ENCODE measurements at regions of chr17 and their contacts with region 1.

Region 1: DNA sequence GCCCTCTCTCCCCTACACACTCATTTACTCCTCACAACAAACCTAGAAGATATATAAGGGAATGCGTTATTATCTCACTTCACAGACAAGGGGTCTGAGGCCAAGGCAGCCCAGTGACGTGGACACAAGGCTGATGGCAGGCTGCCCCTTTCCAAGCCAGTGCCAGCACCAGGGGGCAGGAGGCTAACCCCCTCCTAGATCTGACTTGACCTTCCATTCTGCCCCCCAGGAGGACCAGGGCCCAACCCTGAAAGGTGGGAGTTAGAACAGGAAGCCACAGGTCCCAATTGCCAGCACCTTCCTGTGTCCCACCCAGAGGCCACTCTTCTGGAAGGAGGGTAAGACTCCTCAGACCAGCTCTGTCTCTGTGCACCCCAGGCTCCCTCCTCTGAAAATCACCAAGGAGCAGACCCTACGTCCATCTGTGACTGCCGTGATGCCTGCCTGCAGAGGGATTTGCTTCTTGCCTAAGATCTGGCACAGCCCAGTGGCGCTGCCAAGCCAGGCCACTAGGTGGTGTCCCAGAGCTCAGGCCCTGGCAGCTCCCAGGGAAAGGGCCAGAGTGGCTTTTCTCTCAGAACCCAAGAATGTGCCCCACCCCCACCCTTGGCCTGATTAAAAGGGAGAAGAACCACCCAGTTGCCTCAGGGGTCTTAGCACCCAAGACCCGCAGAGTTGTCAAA is 42.4 kb upstream of the MRPS23 start:
- H3K4me3 ChIP-seq: no peak overlapping the region
- H3K27ac ChIP-seq: no peak overlapping the region
- H3K4me1 ChIP-seq: peaks cover 6% of the 10 kb centered on the region
- CTCF ChIP-seq: peak; percentile 92

Region 2: DNA sequence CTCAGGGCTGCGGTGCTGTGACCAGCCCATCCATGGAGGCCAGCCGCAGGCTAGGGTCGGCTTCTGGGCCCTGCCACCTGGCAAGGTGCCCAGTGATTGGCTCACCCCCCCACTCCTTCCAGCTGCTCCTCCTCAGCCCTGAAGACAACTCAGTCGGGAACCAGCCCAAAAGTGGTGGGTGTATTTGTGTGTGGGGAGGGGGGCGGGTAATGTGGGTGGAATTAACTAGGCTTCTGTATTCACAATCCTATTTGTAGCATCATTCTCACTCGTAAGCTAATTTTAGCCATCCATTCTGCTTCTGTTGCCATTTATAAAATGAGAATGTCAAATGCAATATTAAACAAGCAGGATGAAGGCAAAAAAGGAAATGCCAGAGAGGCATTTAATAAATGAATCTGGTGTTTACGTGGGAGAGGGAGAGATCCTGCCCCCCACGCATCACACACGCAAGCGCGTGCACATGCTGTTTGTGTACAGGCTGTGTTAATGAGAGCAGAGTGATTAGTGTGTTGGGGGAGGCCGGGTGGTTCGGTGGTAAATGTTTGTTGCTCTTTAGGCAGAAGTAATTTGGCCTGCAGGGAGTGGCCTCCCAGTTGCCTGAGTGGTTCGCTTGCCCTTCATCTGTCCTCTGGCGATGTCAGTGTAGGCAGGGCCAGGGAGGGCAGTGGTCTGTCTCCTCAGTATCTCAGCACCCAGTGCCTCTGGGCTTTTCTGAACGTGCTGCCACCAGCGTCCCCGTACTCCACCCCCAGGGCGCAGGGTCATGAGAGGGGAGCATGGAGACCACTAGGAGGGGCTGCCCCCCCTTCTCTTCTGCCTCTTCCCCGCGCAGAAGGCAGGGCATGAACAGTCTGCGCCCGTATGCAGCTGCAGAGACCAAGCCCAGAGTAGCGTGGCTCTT is 287.3 kb before region 1 on chr17:
- CTCF ChIA-PET with region 1: no interaction called
- POLR2A ChIA-PET with region 1: no interaction called
- H3K4me3 ChIP-seq: no peak overlapping the region
- H3K27ac ChIP-seq: peak overlapping the region; percentile 54
- H3K4me1 ChIP-seq: peaks cover 20% of the 10 kb centered on the region
- CTCF ChIP-seq: peak; percentile 36; the same call in 1 of the 2 replicates

Region 3: DNA sequence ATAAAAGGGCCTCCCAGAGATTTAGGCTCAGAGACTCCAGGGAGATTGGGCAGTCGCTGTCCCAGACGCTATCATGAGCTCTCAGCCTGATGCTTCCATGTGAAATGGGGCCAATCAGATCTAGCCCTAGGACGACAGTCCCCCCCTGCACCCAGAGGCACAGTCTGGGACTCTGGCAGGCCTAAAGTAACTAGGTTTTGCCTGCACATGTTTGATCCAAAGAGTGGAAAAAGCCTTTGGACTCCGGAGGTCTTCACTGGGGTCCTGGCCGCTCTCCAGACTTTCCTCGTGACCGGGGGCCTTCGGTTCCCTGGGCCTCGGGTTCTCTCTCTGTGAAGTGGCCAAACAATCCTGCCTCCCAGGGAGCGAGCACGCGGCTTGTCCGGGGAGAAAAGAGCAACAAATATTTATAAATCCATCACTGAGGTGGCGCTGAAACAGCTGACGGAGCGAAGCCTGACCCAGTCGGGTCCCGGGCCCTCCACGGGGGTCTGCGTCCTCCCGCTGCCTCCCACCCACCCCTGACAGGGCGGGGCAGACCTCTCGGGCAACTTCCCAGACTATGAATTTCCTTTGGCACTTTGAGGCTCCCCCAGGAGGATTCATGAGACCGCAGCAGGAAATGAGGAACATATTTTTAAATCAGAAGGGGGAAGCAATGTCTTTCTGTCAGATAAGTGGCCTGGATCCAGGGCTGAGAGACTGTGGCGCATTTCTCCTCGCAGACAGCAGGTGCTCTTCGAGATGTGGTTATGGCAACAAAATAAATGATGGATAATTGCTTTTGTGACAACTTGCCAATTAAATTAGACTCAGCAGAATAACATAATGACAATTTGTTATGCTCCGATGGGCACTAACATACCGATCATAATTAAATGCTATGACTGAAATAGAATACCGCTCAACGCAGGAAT is 81.3 kb before region 1 on chr17:
- CTCF ChIA-PET with region 1: no interaction called
- POLR2A ChIA-PET with region 1: no interaction called
- H3K4me3 ChIP-seq: no peak overlapping the region
- H3K27ac ChIP-seq: peak overlapping the region; percentile 93
- H3K4me1 ChIP-seq: peaks cover 24% of the 10 kb centered on the region
- CTCF ChIP-seq: peak; percentile 31

Region 4: GRCh38 chr17:57842280-57842679 is 50.0 kb before region 1 on chr17:
- CTCF ChIA-PET with region 1: no interaction called
- POLR2A ChIA-PET with region 1: no interaction called
- H3K4me3 ChIP-seq: no peak overlapping the region
- H3K27ac ChIP-seq: no peak overlapping the region
- H3K4me1 ChIP-seq: no peaks in the 10 kb centered on the region
- CTCF ChIP-seq: no peak

Region 5: DNA sequence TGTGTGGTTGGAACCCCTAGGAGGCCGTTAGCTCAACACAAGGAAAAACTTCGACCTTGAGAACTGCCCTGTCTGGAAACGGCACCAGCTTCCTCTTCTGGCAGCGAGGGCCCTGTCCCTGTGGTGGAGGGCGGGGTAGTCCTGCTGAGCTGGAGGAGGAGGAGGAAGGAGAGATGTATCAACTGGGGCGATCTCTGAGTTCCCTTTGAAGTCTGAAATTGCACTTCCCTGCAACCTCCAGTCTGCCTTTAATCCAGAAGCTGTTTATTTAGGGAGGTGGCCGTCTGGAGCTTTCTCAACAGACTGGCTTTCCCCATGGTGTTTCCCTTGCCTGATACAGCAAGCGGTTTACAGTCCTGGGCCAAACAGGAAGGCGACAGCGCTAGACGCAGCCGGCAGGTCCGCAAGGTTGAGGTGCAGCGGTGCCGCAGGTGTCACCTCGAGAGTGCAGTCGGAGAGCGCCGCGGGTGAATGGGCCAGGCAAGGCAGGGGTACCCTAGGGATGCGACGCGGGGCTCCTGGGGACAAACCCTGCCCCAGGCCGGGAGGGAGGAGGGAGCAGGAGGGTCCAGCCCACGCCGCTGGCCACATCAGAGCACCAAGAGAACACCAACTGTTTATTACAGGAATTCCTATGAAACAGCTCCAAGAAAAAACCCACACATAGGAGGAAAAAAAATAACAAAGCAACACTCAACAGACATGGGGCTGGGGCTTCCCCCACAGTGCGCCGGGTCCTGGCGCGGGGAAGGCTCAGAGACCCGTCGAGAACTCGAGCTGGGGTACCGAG is 31.1 kb before region 1 on chr17:
- CTCF ChIA-PET with region 1: interaction called, 32 read pairs
- POLR2A ChIA-PET with region 1: interaction called, 3 read pairs
- H3K4me3 ChIP-seq: no peak overlapping the region
- H3K27ac ChIP-seq: peak overlapping the region; percentile 38; the same call in 1 of the 2 replicates
- H3K4me1 ChIP-seq: peaks cover 4% of the 10 kb centered on the region; the same call in 1 of the 2 replicates
- CTCF ChIP-seq: no peak

Region 6: DNA sequence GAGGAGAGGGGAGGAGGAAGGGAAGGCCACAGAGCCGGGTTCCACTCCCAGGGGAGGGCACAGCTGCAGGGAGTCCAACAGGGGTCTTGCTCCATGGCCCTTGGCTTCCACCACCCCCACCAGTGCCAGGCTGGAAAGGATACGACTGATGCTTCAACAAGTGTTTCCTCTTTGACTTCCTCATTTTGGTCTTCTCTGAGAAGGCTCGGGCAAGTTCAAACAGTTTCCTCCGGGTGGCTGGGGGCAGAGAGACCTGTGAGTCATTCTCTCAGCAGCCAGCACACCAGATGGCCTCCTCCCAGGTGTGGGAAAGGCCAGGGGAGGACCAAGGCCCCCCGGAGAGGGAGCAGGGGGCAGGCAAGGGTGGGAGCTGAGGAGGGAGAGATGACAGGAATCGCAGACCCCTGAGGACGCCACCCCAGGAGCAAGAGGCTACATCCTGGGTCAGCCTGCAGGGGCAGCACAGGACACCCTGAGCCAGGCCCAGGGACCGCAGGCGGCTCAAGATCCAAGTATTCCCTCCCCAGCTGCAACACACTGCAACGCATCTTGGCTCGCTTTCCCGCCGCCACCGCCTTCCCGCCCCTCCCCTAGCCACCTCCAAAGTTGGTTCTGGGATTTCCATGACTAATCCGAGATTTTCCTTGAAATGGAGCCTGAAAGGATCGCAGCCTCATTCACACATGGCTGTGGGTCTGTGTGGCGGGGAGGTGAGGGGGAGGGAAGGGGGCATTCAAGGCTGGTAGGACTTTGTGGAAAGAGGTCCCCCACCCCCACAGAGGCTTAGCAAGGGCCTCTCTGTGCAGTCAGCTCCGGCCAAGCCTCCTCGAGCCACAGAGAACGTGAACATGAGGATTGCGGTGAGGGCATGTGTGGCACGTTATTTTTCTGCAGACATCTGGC is 24.0 kb before region 1 on chr17:
- CTCF ChIA-PET with region 1: interaction called, 36 read pairs
- POLR2A ChIA-PET with region 1: no interaction called
- H3K4me3 ChIP-seq: no peak overlapping the region
- H3K27ac ChIP-seq: peak overlapping the region; percentile 64
- H3K4me1 ChIP-seq: peaks cover 6% of the 10 kb centered on the region; the same call in 1 of the 2 replicates
- CTCF ChIP-seq: peak; percentile 12; the same call in 1 of the 2 replicates

Region 7: DNA sequence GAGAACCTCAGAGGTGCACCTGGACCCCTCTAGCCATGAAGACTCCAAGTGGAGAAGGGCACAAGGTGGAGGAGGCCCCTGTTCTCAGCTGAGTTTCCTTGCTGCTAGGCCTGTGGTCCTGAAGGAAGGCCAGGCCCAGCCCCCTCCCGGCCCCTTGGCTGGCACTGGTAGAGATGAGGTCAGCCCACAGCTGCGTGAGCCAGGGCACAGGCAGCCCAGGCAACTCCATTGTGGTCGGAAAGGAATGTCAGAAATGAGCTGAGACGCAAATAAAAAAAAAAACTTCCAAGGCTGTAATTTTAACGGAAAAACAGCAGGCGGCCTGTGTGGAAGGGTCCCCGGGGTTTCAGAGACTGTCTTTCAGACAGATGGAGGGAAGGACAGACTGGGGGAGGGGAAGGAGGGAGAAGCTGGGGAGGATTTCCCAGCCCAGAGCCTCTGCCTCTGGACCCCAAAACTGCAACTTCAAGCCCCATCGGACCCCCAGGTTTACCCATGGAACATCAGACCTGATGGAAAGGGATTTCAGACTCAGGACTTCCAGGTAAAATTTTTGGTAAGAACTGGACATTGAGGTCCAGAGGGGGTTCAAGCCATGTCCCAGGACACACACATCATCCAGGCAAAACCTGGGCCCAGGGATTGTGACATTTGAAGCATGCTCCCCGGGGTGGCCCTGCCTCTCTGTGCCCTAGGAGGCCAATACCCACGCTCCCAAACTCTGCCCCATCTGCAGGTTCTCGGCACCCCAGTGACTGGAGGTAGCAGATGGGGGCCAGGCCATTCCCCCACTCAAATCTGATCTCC is 16.8 kb before region 1 on chr17:
- CTCF ChIA-PET with region 1: interaction called, 95 read pairs
- POLR2A ChIA-PET with region 1: interaction called, 11 read pairs
- H3K4me3 ChIP-seq: no peak overlapping the region
- H3K27ac ChIP-seq: peak overlapping the region; percentile 87
- H3K4me1 ChIP-seq: peaks cover 21% of the 10 kb centered on the region
- CTCF ChIP-seq: peak; percentile 65

Region 8: GRCh38 chr17:57902800-57903759 is 10.8 kb after region 1 on chr17:
- CTCF ChIA-PET with region 1: interaction called, 22 read pairs
- POLR2A ChIA-PET with region 1: no interaction called
- H3K4me3 ChIP-seq: no peak overlapping the region
- H3K27ac ChIP-seq: no peak overlapping the region
- H3K4me1 ChIP-seq: no peaks in the 10 kb centered on the region
- CTCF ChIP-seq: no peak

Region 9: GRCh38 chr17:57946798-57947358 is 54.6 kb after region 1 on chr17:
- CTCF ChIA-PET with region 1: interaction called, 38 read pairs
- POLR2A ChIA-PET with region 1: interaction called, 3 read pairs
- H3K4me3 ChIP-seq: no peak overlapping the region
- H3K27ac ChIP-seq: no peak overlapping the region
- H3K4me1 ChIP-seq: peaks cover 52% of the 10 kb centered on the region
- CTCF ChIP-seq: no peak

Region 10: DNA sequence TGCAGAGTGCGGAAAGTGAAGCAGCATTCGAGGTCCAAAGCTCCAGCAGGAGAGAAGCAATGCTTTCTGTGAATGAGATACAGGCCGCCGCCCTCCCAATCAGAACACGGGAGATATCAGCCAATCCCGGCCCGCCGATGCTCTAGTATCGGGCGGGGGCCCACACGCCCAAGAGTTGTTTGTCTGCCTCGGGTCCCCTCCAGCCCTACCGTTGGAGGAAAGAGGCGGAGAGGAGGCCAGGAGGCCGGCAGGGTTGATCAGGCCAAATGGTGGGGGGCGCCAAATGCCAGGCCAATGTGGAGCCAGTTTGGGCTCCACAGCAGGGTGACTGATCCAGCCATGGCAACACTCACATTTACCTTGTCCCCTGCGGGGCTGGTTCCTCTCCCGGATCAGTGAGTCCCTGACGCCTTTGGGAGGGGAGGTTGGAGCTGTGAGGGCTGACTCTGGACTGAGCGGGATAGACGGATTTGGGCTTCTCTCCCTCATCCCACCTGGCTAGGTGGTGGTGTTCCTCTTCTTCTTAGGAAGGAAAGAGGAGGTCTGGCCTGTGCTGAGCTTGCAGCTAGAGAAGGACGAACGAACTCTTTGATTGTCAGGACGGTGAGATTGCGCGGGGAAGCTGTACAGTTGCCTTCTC is 73.4 kb after region 1 on chr17:
- CTCF ChIA-PET with region 1: interaction called, 12 read pairs
- POLR2A ChIA-PET with region 1: no interaction called
- H3K4me3 ChIP-seq: no peak overlapping the region
- H3K27ac ChIP-seq: no peak overlapping the region
- H3K4me1 ChIP-seq: peaks cover 3% of the 10 kb centered on the region; the same call in 1 of the 2 replicates
- CTCF ChIP-seq: no peak

Region 11: DNA sequence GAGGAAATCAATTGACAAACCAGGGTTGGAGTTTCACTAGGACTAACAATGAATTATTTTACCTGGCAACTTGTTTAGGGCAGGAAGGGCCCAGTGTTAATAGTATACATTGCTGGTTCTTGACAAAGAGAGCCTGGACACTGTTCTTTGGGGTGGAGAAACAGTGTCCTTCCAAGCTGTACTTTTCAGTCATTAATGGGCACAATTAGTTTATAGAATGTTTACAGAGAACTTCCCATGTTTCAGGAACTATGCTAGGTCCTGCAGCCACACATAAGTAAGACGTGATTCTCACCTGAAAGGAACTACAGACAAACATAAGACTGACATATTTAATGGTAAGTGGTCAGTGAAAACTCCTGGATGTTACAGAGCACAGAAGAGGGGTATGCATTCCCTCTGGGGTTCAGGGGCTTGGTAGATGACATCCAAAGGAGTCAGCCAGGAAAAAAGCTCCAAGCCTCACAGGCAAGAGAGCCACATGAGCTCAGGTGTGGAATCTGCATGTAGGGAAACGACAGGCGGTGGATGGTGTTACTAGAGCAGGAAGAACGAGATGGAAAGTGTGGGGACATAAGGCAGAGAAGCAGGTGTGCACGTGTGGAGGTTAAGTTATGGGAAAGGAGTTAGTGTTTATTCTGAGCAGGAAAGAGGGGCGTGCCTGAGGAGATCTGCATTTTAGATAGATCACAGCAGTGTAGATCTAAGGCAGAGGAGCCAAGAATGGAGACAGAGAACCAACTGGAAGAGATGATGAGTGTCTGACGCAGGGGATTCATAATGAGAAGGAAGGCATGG is 187.2 kb after region 1 on chr17:
- CTCF ChIA-PET with region 1: no interaction called
- POLR2A ChIA-PET with region 1: no interaction called
- H3K4me3 ChIP-seq: no peak overlapping the region
- H3K27ac ChIP-seq: no peak overlapping the region
- H3K4me1 ChIP-seq: peaks cover 5% of the 10 kb centered on the region; the same call in 1 of the 2 replicates
- CTCF ChIP-seq: no peak